Panc1 (cell line): ENCODE measurements at regions of chr16 and their contacts with region 1.

Region 1: GRCh38 chr16:23889189-23889588 is 53.4 kb downstream of the PRKCB start:
- DNase-seq: no peak
- ATAC-seq: no peak
- H3K4me3 ChIP-seq: no peak overlapping the region
- H3K27ac ChIP-seq: no peak overlapping the region
- H3K4me1 ChIP-seq: no peaks in the 10 kb centered on the region
- H3K27me3 ChIP-seq: no peaks in the 10 kb centered on the region
- CTCF ChIP-seq: no peak

Region 2: GRCh38 chr16:23195366-23195978 is 693.7 kb before region 1 on chr16:
- CTCF ChIA-PET with region 1: interaction called, 11 read pairs
- POLR2A ChIA-PET with region 1: no interaction called
- in situ Hi-C with region 1: no loop called
- intact Hi-C with region 1: no loop called
- DNase-seq: no peak
- ATAC-seq: no peak
- H3K4me3 ChIP-seq: no peak overlapping the region
- H3K27ac ChIP-seq: no peak overlapping the region; the same call in 1 of the 2 replicates
- H3K4me1 ChIP-seq: no peaks in the 10 kb centered on the region
- H3K27me3 ChIP-seq: no peaks in the 10 kb centered on the region
- CTCF ChIP-seq: no peak

Region 3: GRCh38 chr16:24309222-24309905 is 420.2 kb after region 1 on chr16:
- CTCF ChIA-PET with region 1: no interaction called
- POLR2A ChIA-PET with region 1: interaction called, 14 read pairs
- in situ Hi-C with region 1: no loop called
- intact Hi-C with region 1: no loop called
- DNase-seq: peak; percentile 53
- ATAC-seq: peak; percentile 68
- H3K4me3 ChIP-seq: no peak overlapping the region
- H3K27ac ChIP-seq: no peak overlapping the region
- H3K4me1 ChIP-seq: no peaks in the 10 kb centered on the region
- H3K27me3 ChIP-seq: no peaks in the 10 kb centered on the region
- CTCF ChIP-seq: no peak